Spleen (tissue), 13 donors: ENCODE measurements at regions of chr3 and their contacts with region 1.

Region 1: DNA sequence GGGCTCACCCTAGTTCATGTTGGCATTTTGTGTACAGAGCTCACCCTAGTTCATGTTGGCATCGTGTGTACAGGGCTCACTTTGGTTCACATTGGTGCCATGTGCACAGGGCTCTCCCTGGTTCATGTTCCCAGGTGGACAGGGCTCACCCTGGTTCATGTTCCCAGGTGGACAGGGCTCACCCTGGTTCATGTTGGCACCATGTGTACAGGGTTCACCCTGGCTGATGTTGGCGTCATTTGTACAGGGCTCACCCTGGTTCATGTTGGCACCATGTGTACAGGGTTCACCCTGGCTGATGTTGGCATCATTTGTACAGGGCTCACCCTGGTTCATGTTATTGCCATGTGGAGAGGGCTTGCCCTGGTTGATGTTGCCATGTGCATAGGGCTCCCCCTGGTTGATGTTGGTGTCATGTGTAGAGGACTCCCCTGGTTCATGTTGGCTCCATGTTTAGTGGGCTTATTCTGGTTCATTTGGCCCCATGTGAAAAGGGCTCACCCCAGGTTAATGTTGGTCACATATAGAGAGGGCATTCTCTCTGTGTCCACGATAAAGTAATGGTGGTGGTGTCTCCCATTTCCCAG is 31.7 kb upstream of the NR2C2 start:
- DNase-seq: no peak
- H3K4me3 ChIP-seq: no peak overlapping the region
- H3K27ac ChIP-seq: no peak overlapping the region
- H3K4me1 ChIP-seq: peaks cover 0 to 6% (median 2%) of the 10 kb centered on the region in 6 donors
- H3K27me3 ChIP-seq: no peaks in the 10 kb centered on the region
- CTCF ChIP-seq: no peak
- POLR2A ChIP-seq: no peak

Region 2: GRCh38 chr3:14791343-14791945 is 124.3 kb before region 1 on chr3:
- intact Hi-C with region 1: loop called (anchors 10 kb)
- DNase-seq: peak; percentile 80
- H3K4me3 ChIP-seq: no peak overlapping the region
- H3K27ac ChIP-seq: no peak overlapping the region
- H3K4me1 ChIP-seq: peaks cover 0 to 32% (median 18%) of the 10 kb centered on the region in 6 donors
- H3K27me3 ChIP-seq: peaks cover 0 to 19% (median 0%) of the 10 kb centered on the region in 7 donors
- CTCF ChIP-seq: peak; percentile 11 to 69 (median 60)
- POLR2A ChIP-seq: no peak

Region 3: GRCh38 chr3:14847613-14848541 is 67.9 kb before region 1 on chr3:
- intact Hi-C with region 1: no loop called
- DNase-seq: no peak
- H3K4me3 ChIP-seq: peak overlapping the region in 1 of 8 donors; percentile 2
- H3K27ac ChIP-seq: peak overlapping the region in 7 of 8 donors; percentile 39 to 71 (median 59)
- H3K4me1 ChIP-seq: peaks cover 11 to 66% (median 28%) of the 10 kb centered on the region in 6 donors
- H3K27me3 ChIP-seq: peaks cover 0 to 16% (median 0%) of the 10 kb centered on the region in 7 donors
- CTCF ChIP-seq: no peak
- POLR2A ChIP-seq: no peak